Brain microvascular endothelial cell (primary cell): ENCODE measurements at regions of chr22 and their contacts with region 1.

Region 1: GRCh38 chr22:40436505-40437451 is 66.4 kb downstream of the SGSM3 start:
- DNase-seq: peak; percentile 59
- H3K4me3 ChIP-seq: peak overlapping the region; percentile 9
- H3K27ac ChIP-seq: peak overlapping the region; percentile 63
- H3K27me3 ChIP-seq: no peaks in the 10 kb centered on the region
- CTCF ChIP-seq: peak; percentile 57

Region 2: DNA sequence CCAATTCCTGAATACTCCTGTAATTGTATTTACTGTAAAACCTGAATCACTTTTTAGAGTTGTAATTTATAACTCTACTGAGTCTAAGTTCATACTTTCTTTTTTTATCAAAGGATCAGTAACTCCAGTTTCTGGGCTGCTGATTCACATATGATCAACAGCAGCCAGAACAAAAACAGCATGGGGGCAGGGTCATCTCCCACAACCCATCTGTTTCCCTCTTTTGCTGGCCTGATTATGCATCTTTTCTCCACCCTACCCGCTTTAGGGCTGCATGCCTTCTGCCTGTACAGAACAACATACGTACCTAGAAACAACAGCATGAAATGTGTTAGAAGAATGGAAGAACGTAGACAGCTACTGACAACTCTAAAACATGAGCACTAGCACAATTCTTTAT is 123.8 kb after region 1 on chr22:
- in situ Hi-C with region 1: no loop called
- DNase-seq: peak; percentile 45
- H3K4me3 ChIP-seq: no peak overlapping the region
- H3K27ac ChIP-seq: no peak overlapping the region
- H3K27me3 ChIP-seq: no peaks in the 10 kb centered on the region
- CTCF ChIP-seq: no peak

Region 3: DNA sequence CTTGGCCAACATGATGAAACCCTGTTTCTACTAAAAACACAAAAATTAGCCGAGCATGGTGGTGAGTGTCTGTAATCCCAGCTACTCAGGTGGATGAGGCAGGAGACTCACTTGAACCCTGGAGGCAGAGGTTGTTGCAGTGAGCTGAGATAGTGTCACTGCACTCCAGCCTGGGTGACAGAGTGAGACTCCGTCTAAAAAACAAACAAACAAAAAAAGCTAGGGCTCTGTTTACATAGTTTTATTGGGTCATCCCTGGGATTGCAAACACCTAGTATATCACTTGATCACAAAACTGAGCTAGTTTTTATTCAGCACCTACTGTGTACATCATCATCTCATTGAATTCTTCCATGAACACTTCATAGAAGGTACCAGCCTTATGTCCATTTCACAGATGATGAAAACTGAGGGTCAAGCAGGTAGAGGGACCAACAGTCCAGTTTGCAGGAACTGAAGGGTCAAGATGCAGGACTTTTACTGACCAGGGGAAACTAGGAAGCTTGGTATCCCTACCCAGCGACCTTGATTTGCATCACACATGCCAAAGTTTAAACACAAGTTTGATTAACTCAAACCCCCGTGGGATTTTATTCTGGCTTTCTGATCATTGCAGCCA is 208.9 kb after region 1 on chr22:
- in situ Hi-C with region 1: loop called (anchors 5 kb)
- DNase-seq: no peak
- H3K4me3 ChIP-seq: no peak overlapping the region
- H3K27ac ChIP-seq: no peak overlapping the region
- H3K27me3 ChIP-seq: no peaks in the 10 kb centered on the region
- CTCF ChIP-seq: no peak

Region 4: GRCh38 chr22:40666151-40666848 is 229.5 kb after region 1 on chr22:
- in situ Hi-C with region 1: no loop called
- DNase-seq: no peak
- H3K4me3 ChIP-seq: no peak overlapping the region
- H3K27ac ChIP-seq: no peak overlapping the region
- H3K27me3 ChIP-seq: no peaks in the 10 kb centered on the region
- CTCF ChIP-seq: no peak

Region 5: DNA sequence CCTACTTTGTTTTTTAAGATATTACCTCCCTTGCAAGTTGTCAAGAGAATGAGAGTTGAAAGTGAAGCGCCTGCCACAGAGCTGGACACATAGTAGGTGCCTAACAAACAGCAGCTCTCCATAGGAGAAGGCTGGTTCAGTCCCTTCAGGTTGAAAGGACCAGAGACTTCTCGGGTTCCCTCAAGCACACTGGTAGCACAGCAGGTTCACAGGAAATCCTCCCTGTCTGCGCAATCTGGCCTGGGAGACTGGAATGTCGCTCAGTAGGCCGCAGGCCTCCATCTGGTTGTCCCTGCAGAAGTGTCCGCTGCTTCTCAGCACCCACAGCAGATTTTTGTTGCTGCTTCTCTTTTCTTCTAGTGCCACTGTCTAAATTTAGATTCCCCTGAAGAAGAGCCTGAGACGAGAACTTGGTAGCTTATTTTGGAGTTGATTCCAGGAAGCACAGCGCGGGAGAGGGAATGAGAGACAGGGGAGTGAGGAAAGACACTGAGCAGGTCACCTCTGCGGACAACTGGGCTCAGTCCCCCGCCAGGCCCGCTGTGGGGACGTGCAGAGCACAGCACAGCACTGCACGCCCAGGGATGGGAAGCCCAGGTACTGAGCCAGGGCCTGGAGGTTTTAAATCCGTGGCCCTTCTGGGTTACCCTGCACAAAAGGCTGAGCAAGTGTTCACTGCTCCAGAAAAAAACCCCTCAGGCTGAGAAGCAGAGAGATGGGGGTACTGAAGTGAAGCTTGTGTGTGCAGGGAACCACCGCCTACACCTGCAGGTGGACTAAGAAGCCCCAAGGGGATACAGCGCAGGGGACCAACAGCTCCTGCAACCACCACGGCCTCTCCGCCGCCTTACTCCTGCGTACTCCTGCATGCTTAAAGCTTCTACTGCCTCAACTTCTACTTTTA is 546.0 kb after region 1 on chr22:
- in situ Hi-C with region 1: no loop called
- DNase-seq: no peak
- H3K4me3 ChIP-seq: no peak overlapping the region
- H3K27ac ChIP-seq: no peak overlapping the region
- H3K27me3 ChIP-seq: no peaks in the 10 kb centered on the region
- CTCF ChIP-seq: no peak